ENCODE measurements at regions of chr7 and their contacts with region 1.

Region 1: DNA sequence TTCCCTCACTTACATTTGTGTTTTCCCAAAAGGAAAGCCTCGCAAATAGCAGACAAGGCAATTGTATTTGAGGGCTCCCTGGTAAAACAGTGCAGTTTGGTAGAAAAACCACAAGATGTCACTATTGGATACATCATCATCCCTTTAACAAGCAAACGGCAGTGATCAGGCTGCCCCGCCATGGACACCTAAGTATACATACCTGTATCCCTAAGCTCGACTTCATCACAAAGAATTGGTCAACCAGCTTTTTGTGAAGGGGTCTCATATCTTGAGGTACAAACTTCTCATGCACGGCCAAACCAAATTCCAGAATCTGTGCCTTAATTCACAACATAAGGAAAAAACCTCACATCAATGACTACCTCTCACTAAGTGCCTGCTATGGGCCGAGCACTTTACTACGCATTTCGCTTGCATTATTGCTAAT is 179.5 kb upstream of the IMMP2L start:
- DNase-seq: peak in 4 of 5 donors; percentile 33 to 48 (median 42)
- H3K4me3 ChIP-seq: no peak overlapping the region
- H3K27ac ChIP-seq: no peak overlapping the region
- H3K4me1 ChIP-seq: no peaks in the 10 kb centered on the region
- H3K27me3 ChIP-seq: no peaks in the 10 kb centered on the region
- CTCF ChIP-seq: peak; percentile 21 to 61 (median 45)
- EP300 ChIP-seq: no peak
- POLR2A ChIP-seq: no peak

Region 2: GRCh38 chr7:112495810-112496462 is 754.1 kb after region 1 on chr7:
- intact Hi-C with region 1: loop called in 2 of 4 experiments (anchors 5 kb)
- DNase-seq: peak in 4 of 5 donors; percentile 23 to 59 (median 41)
- H3K4me3 ChIP-seq: no peak overlapping the region
- H3K27ac ChIP-seq: no peak overlapping the region
- H3K4me1 ChIP-seq: no peaks in the 10 kb centered on the region
- H3K27me3 ChIP-seq: no peaks in the 10 kb centered on the region
- CTCF ChIP-seq: peak in 2 of 3 donors; percentile 38 to 45
- EP300 ChIP-seq: no peak
- POLR2A ChIP-seq: no peak